A673 (cell line): ENCODE measurements at regions of chr12 and their contacts with region 1.

Region 1: DNA sequence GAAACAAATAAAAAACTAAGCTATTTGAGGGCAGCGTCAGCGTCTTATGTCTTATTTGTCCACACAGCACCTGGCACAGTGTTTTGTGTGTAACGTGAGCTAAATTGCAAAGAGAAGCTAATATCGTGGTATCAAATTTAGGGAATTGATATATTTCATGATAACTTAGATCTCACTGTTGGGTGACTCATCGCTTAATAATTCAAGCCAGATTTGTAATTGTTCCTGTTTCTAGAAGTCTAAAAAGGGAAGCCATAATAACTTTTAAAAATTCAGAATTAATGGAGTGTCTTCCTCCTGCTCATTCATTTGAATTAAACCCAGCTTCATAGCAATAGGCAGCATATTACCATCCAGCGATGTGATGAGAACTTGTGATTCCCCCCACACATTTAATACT is 214.7 kb downstream of the PDZRN4 start:
- DNase-seq: peak; percentile 2
- H3K4me3 ChIP-seq: no peak overlapping the region
- H3K27ac ChIP-seq: no peak overlapping the region
- H3K4me1 ChIP-seq: no peaks in the 10 kb centered on the region
- H3K27me3 ChIP-seq: no peaks in the 10 kb centered on the region
- CTCF ChIP-seq: no peak

Region 2: DNA sequence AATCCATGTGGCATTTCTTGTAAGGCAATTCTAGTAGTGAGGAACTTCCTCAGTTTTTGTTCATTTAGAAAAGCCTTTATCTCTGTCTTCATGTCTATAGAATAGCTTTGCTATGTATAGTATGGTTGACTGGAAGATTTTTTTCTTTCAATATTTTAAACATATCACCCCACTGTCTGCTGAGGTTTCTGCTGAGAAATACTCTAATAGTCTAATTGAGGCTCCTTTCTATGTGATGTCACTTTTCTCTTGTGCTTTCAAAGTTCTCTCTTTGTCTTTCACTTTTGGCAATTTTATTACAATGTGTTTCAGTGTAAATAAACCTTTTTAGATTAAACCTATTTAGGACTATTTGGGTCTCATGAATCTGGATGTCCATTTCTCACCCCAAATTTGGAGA is 21.9 kb before region 1 on chr12:
- CTCF ChIA-PET with region 1: no interaction called
- POLR2A ChIA-PET with region 1: no interaction called
- intact Hi-C with region 1: loop called (anchors 2 kb)
- DNase-seq: no peak
- H3K4me3 ChIP-seq: no peak overlapping the region
- H3K27ac ChIP-seq: no peak overlapping the region
- H3K4me1 ChIP-seq: no peaks in the 10 kb centered on the region
- H3K27me3 ChIP-seq: no peaks in the 10 kb centered on the region
- CTCF ChIP-seq: no peak